ENCODE measurements at regions of chr2 and their contacts with region 1.

Region 1: DNA sequence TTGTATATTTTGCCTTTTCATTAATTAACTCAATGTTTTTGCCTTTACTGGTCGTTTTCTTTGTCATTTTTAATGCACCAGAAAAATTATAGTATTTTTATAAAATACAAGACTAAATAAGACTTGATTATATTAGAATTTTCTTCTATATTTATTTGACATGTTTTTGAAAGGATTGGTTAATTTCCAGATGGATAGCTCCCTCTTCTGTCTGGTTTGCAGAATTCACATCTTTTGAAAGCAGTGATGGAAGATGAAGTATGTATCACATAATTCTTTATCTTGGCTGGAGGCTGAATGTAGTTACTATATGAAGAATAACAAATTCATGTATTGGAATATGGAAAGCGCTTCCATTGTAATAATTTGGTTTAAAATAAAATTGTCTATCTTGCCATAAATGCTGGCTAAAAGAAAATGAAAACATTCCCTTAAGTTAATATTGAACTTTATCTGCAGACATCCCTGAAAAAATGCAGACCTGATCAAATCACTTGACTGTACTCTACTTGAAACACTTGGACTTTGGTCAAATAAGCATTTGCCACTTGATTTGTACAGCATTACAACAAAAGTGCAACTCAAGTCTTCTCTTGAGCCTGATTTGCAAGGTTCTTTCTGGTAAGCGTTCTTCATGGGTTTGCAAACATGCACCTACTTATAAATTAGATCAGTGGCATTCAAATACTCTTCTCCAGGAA is 86.3 kb upstream of the EFEMP1 start:
- DNase-seq: peak; percentile 35
- H3K4me3 ChIP-seq: no peak overlapping the region
- H3K27ac ChIP-seq: no peak overlapping the region
- H3K4me1 ChIP-seq: no peaks in the 10 kb centered on the region
- H3K27me3 ChIP-seq: no peaks in the 10 kb centered on the region
- CTCF ChIP-seq: peak; percentile 47 to 68

Region 2: GRCh38 chr2:55771612-55772011 is 238.3 kb before region 1 on chr2:
- CTCF ChIA-PET with region 1: no interaction called
- dilution Hi-C with region 1: no loop called
- in situ Hi-C with region 1: no loop called
- intact Hi-C with region 1: loop called (anchors 1 kb)
- DNase-seq: peak; percentile 35
- H3K4me3 ChIP-seq: no peak overlapping the region
- H3K27ac ChIP-seq: no peak overlapping the region
- H3K4me1 ChIP-seq: peaks cover 18% of the 10 kb centered on the region
- H3K27me3 ChIP-seq: no peaks in the 10 kb centered on the region
- CTCF ChIP-seq: peak; percentile 50 to 71

Region 3: GRCh38 chr2:55992465-55992864 is 17.4 kb before region 1 on chr2:
- CTCF ChIA-PET with region 1: no interaction called
- dilution Hi-C with region 1: no loop called
- in situ Hi-C with region 1: no loop called
- intact Hi-C with region 1: no loop called
- DNase-seq: peak; percentile 88
- H3K4me3 ChIP-seq: no peak overlapping the region
- H3K27ac ChIP-seq: no peak overlapping the region
- H3K4me1 ChIP-seq: peaks cover 12% of the 10 kb centered on the region
- H3K27me3 ChIP-seq: no peaks in the 10 kb centered on the region
- CTCF ChIP-seq: no peak

Region 4: DNA sequence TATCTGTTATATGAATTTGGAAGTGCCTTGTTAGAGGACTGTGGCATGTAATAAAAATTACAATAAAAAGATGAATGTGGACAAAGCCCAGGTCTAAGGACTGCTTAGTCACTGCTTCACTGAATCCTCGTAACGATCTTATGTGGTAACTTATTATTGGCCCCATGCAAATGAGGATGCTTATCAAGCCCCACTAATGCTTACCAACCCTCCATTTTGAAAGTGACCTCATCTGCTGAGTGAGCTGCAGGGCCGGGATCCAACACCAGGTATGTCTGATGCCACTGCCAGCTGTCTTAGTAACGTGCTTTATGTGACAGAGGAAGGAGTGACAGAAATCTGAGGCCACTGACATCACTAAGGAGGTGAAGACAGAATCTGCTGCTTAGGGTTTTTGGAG is 108.6 kb after region 1 on chr2:
- CTCF ChIA-PET with region 1: no interaction called
- dilution Hi-C with region 1: no loop called
- in situ Hi-C with region 1: no loop called
- intact Hi-C with region 1: no loop called
- DNase-seq: no peak
- H3K4me3 ChIP-seq: no peak overlapping the region
- H3K27ac ChIP-seq: no peak overlapping the region
- H3K4me1 ChIP-seq: peaks cover 4% of the 10 kb centered on the region
- H3K27me3 ChIP-seq: no peaks in the 10 kb centered on the region
- CTCF ChIP-seq: no peak

Measured in mammary epithelial cell (primary cell).